CD4-positive, alpha-beta T cell (primary cell): ENCODE measurements at regions of chr12 and their contacts with region 1.

Region 1: GRCh38 chr12:53321074-53321814 is at the start of gene AAAS:
- DNase-seq: peak; percentile 86 to 97 (median 94)
- ATAC-seq: peak; percentile 79
- H3K4me3 ChIP-seq: peak within 1 kb of the TSS; percentile 69
- H3K4me3 Mint-ChIP-seq: peak within 1 kb of the TSS; percentile 94
- H3K27ac ChIP-seq: peak within 1 kb of the TSS; percentile 61 to 77
- H3K27ac Mint-ChIP-seq: peak within 1 kb of the TSS; percentile 87
- H3K4me1 ChIP-seq: peaks cover 52% of the 10 kb centered on the region
- H3K4me1 Mint-ChIP-seq: peaks cover 44% of the 10 kb centered on the region
- H3K27me3 ChIP-seq: no peaks in the 10 kb centered on the region
- H3K27me3 Mint-ChIP-seq: no peaks in the 10 kb centered on the region
- CTCF ChIP-seq: peak; percentile 100
- total RNA-seq, gene AAAS: 21.0 to 22.7 TPM

Region 2: GRCh38 chr12:53005986-53006809 is 315.0 kb before region 1 on chr12 and contains the start of gene EIF4B:
- CTCF ChIA-PET with region 1: no interaction called
- POLR2A ChIA-PET with region 1: interaction called, 10 read pairs
- intact Hi-C with region 1: no loop called
- DNase-seq: peak; percentile 98 to 100 (median 99)
- ATAC-seq: peak; percentile 85
- H3K4me3 ChIP-seq: peak within 1 kb of the TSS; percentile 100
- H3K4me3 Mint-ChIP-seq: peak within 1 kb of the TSS; percentile 99
- H3K27ac ChIP-seq: peak within 1 kb of the TSS; percentile 90 to 97
- H3K27ac Mint-ChIP-seq: peak within 1 kb of the TSS; percentile 99
- H3K4me1 ChIP-seq: peaks cover 50% of the 10 kb centered on the region
- H3K4me1 Mint-ChIP-seq: peaks cover 57% of the 10 kb centered on the region
- H3K27me3 ChIP-seq: no peaks in the 10 kb centered on the region
- H3K27me3 Mint-ChIP-seq: no peaks in the 10 kb centered on the region
- CTCF ChIP-seq: no peak
- total RNA-seq, gene EIF4B: 794 to 806 TPM

Region 3: GRCh38 chr12:53213348-53213747 is 107.9 kb before region 1 on chr12:
- CTCF ChIA-PET with region 1: interaction called, 21 read pairs
- POLR2A ChIA-PET with region 1: interaction called, 6 read pairs
- intact Hi-C with region 1: loop called in 1 of 2 experiments (anchors 1 kb)
- DNase-seq: peak; percentile 76 to 92 (median 82)
- ATAC-seq: peak; percentile 75
- H3K4me3 ChIP-seq: no peak overlapping the region
- H3K4me3 Mint-ChIP-seq: peak overlapping the region; percentile 61
- H3K27ac ChIP-seq: no peak overlapping the region
- H3K27ac Mint-ChIP-seq: peak overlapping the region; percentile 64
- H3K4me1 ChIP-seq: peaks cover 81% of the 10 kb centered on the region
- H3K4me1 Mint-ChIP-seq: peaks cover 68% of the 10 kb centered on the region
- H3K27me3 ChIP-seq: no peaks in the 10 kb centered on the region
- H3K27me3 Mint-ChIP-seq: no peaks in the 10 kb centered on the region
- CTCF ChIP-seq: peak; percentile 93

Region 4: GRCh38 chr12:53295070-53295890 is 26.0 kb before region 1 on chr12 and contains the start of gene PFDN5:
- CTCF ChIA-PET with region 1: interaction called, 43 read pairs
- POLR2A ChIA-PET with region 1: interaction called, 109 read pairs
- intact Hi-C with region 1: loop called (anchors 1 kb)
- DNase-seq: peak; percentile 76 to 96 (median 86)
- ATAC-seq: peak; percentile 92
- H3K4me3 ChIP-seq: peak within 1 kb of the TSS; percentile 69
- H3K4me3 Mint-ChIP-seq: peak within 1 kb of the TSS; percentile 99
- H3K27ac ChIP-seq: peak within 1 kb of the TSS; percentile 69 to 71
- H3K27ac Mint-ChIP-seq: peak within 1 kb of the TSS; percentile 97
- H3K4me1 ChIP-seq: peaks cover 38% of the 10 kb centered on the region
- H3K4me1 Mint-ChIP-seq: peaks cover 50% of the 10 kb centered on the region
- H3K27me3 ChIP-seq: no peaks in the 10 kb centered on the region
- H3K27me3 Mint-ChIP-seq: no peaks in the 10 kb centered on the region
- CTCF ChIP-seq: no peak
- total RNA-seq, gene PFDN5: 757 to 763 TPM

Region 5: GRCh38 chr12:53352331-53353256 is 31.4 kb after region 1 on chr12:
- CTCF ChIA-PET with region 1: interaction called, 6 read pairs
- POLR2A ChIA-PET with region 1: interaction called, 15 read pairs
- intact Hi-C with region 1: no loop called
- DNase-seq: peak; percentile 73 to 94 (median 82)
- ATAC-seq: peak; percentile 100
- H3K4me3 ChIP-seq: no peak overlapping the region
- H3K4me3 Mint-ChIP-seq: no peak overlapping the region
- H3K27ac ChIP-seq: no peak overlapping the region
- H3K27ac Mint-ChIP-seq: no peak overlapping the region
- H3K4me1 ChIP-seq: peaks cover 8% of the 10 kb centered on the region
- H3K4me1 Mint-ChIP-seq: peaks cover 7% of the 10 kb centered on the region
- H3K27me3 ChIP-seq: no peaks in the 10 kb centered on the region
- H3K27me3 Mint-ChIP-seq: no peaks in the 10 kb centered on the region
- CTCF ChIP-seq: peak; percentile 82

Region 6: DNA sequence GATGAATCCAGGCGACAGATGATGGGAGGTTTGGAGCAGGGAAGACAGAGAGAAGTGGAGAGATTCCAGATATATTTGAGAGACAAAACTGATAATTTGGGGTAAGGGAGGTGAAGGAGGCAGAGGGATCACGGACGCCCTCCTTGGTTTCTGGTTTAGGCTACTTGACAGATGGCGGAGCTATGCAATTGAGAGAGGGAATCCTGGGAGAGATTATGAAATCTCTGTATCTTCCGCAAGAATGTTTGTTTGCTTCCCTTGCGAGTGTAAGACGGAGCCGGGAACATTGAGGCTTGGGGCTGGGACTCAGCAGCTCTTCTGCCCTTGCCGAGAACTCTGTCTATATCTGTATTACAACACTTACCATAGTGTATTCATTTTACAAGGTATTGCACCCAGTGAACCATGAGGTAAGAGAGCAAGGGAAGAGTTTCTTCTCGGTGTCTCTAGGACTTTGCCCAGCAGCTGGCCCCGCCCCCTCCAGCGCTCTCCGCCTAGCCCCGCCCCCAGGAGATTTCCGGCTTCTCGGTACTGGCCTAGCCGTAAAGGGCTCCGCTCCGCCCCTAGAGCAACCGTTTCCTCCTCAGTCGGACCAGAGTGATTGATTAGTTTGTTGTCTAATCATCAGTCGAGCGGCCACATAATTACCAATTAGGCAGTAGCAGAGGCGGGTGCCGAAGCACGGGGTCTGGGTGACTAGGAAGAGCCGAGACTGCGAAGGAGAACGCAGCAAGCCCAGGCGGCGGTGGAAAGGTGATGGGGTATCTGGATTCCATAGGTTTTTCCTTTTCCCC is 120.0 kb after region 1 on chr12 and contains the start of gene PRR13:
- CTCF ChIA-PET with region 1: interaction called, 12 read pairs
- POLR2A ChIA-PET with region 1: interaction called, 13 read pairs
- intact Hi-C with region 1: no loop called
- DNase-seq: peak; percentile 96 to 100 (median 98)
- ATAC-seq: peak; percentile 97
- H3K4me3 ChIP-seq: peak within 1 kb of the TSS; percentile 61
- H3K4me3 Mint-ChIP-seq: peak within 1 kb of the TSS; percentile 94
- H3K27ac ChIP-seq: peak within 1 kb of the TSS; percentile 59 to 84
- H3K27ac Mint-ChIP-seq: peak within 1 kb of the TSS; percentile 87
- H3K4me1 ChIP-seq: peaks cover 37% of the 10 kb centered on the region
- H3K4me1 Mint-ChIP-seq: peaks cover 48% of the 10 kb centered on the region
- H3K27me3 ChIP-seq: no peaks in the 10 kb centered on the region
- H3K27me3 Mint-ChIP-seq: no peaks in the 10 kb centered on the region
- CTCF ChIP-seq: no peak
- total RNA-seq, gene PRR13: 133 to 142 TPM

Region 7: GRCh38 chr12:53508534-53509199 is 187.4 kb after region 1 on chr12:
- CTCF ChIA-PET with region 1: interaction called, 9 read pairs
- POLR2A ChIA-PET with region 1: interaction called, 3 read pairs
- intact Hi-C with region 1: loop called in 1 of 2 experiments (anchors 5 kb)
- DNase-seq: peak; percentile 69 to 88 (median 78)
- ATAC-seq: peak; percentile 99
- H3K4me3 ChIP-seq: no peak overlapping the region
- H3K4me3 Mint-ChIP-seq: no peak overlapping the region
- H3K27ac ChIP-seq: no peak overlapping the region
- H3K27ac Mint-ChIP-seq: peak overlapping the region; percentile 52
- H3K4me1 ChIP-seq: peaks cover 9% of the 10 kb centered on the region
- H3K4me1 Mint-ChIP-seq: peaks cover 6% of the 10 kb centered on the region
- H3K27me3 ChIP-seq: no peaks in the 10 kb centered on the region
- H3K27me3 Mint-ChIP-seq: no peaks in the 10 kb centered on the region
- CTCF ChIP-seq: peak; percentile 87